Prostate gland (tissue), 2 donors: ENCODE measurements at regions of chr1 and their contacts with region 1.

Region 1: GRCh38 chr1:9874959-9875635 is 35.0 kb downstream of the CTNNBIP1 start:
- DNase-seq: peak; percentile 56
- H3K4me3 ChIP-seq: no peak overlapping the region
- H3K27ac ChIP-seq: peak overlapping the region; percentile 18 to 57
- H3K4me1 ChIP-seq: peaks cover 2% of the 10 kb centered on the region
- H3K27me3 ChIP-seq: no peaks in the 10 kb centered on the region
- CTCF ChIP-seq: peak; percentile 91 to 94 (median 92)
- POLR2A ChIP-seq: no peak

Region 2: DNA sequence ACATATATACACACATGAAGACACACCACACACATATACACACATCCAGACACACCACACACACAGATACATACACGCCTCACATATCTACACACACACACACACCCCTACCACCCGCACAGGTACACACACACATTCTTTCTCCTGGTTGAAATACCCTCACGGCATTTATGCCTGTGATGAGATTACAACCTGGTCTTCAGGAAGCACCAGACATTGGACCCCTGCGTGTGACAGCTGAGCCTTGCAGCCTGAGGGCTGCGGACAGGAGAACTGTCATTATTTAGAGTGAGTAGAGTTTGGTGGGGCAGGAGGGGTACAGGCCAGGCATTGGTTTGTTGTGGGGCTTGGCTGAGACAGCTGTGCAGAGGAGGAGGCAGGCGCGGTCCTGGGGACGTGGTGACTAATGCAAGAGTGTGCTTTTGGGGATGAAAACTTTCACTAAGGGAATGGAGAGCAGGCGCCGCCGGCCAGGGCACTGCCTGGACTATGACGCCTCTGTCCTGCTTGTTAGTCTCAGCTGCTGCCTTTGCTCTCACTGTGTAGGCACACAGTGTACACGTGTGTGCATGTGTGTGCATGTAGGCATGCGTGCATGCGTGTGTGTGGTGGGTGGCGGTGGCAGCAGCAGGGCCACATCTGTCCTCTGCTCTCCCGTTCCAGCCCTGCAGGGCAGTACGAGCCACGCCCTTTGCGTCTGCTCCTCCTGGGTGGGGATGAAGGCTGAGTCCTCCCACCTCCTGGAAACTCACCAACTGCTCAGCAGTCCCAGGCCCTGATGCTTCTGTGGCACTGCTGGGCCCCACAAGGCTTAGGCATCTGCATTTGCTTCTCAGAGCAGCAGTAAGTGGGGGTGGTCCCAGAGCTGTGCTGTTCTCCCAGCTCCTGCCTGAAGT is 524.8 kb before region 1 on chr1:
- intact Hi-C with region 1: no loop called
- DNase-seq: no peak
- H3K4me3 ChIP-seq: no peak overlapping the region
- H3K27ac ChIP-seq: no peak overlapping the region
- H3K4me1 ChIP-seq: peaks cover 4% of the 10 kb centered on the region
- H3K27me3 ChIP-seq: no peaks in the 10 kb centered on the region
- CTCF ChIP-seq: no peak
- POLR2A ChIP-seq: no peak

Region 3: DNA sequence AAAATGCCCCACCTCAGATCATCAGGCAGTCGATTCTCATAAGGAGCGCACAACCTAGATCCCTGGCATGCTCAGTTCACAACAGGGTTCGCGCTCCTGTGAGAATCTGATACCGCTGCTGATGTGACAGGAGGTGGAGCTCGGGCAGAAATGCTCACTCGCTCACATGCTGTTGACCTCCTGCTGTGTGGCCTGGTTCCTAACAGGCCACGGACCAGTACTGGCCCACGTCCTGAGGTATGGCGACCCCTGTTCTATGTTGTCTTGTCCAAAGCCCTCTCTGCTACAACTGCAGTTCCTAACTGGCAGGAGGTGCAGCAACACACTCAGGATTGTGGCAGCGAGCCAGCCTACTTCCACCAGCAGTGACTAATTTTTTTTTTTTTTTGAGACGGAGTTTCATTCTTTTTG is 122.0 kb before region 1 on chr1:
- intact Hi-C with region 1: no loop called
- DNase-seq: no peak
- H3K4me3 ChIP-seq: no peak overlapping the region
- H3K27ac ChIP-seq: no peak overlapping the region
- H3K4me1 ChIP-seq: no peaks in the 10 kb centered on the region
- H3K27me3 ChIP-seq: no peaks in the 10 kb centered on the region
- CTCF ChIP-seq: no peak
- POLR2A ChIP-seq: no peak

Region 4: DNA sequence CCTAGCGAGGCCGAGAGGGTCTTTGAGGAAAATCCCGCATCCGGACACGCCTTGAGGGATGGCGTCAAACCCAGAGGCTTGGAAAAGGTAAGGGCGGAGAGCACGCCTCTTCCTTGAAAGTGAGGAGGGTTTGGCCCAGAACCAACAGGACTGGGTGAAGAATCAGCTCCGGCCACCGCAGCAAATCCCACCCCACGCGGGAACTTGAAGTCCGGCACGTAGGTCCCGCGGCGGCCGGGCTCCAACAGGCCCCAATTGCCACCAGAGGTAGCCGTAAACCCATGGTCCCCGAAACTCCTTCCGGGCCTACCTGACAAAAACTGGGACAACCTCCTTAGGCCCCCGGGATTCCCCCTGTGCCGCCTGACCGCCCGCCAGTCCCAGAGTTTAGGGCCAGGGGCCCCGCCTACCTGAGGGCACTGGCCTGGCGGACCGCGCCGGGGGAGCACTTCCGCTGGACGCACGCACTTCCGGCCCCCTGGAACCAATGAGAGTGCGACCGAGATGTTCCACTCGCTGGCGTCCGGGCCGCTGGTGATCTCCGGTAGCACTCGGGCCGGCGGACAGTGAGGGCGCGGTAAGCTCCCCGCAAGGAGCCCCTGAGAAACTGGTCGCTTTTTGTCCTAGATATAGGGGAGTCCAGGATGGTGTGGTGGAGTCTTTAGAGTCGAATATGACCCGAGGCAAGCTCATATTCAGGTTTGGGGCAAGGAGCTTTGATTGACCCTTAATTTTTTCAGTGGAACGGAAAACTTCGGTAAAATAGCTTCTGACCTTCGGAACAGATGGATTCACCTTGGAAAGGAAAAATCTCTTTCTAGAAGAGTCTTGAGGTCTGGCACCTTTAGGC is 68.1 kb after region 1 on chr1 and contains the starts of genes LZIC and NMNAT1:
- intact Hi-C with region 1: loop called (anchors 5 kb)
- DNase-seq: peak; percentile 89
- H3K4me3 ChIP-seq: peak within 1 kb of the TSS; percentile 63 to 77
- H3K27ac ChIP-seq: peak within 1 kb of the TSS; percentile 79 to 86
- H3K4me1 ChIP-seq: no peaks in the 10 kb centered on the region
- H3K27me3 ChIP-seq: no peaks in the 10 kb centered on the region
- CTCF ChIP-seq: peak in 2 of 4 experiments; percentile 23 to 40
- POLR2A ChIP-seq: peak; percentile 79
- total RNA-seq, gene LZIC: 21.5 to 42.2 TPM
- total RNA-seq, gene NMNAT1: 7.2 to 8.7 TPM

Region 5: DNA sequence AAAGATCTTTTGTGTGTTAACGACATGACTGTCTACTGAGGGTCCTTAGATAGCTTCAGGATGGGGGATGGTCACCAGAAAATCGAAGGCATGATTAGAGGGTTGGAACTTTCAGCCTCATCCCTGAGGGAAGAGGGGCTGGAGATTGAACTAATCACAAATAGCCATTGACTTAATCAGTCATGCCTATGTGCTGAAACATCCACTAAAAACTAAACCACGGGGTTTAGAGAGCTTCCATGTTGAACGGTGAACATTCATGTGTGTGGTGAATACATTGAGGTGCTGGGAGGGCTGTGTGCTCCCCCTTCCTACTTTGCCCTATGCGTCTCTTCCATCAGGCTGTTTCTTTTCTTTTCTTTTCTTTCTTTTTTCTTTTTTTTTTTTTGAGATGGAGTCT is 138.9 kb after region 1 on chr1:
- intact Hi-C with region 1: no loop called
- DNase-seq: no peak
- H3K4me3 ChIP-seq: no peak overlapping the region
- H3K27ac ChIP-seq: no peak overlapping the region
- H3K4me1 ChIP-seq: no peaks in the 10 kb centered on the region
- H3K27me3 ChIP-seq: no peaks in the 10 kb centered on the region
- CTCF ChIP-seq: no peak
- POLR2A ChIP-seq: no peak

Region 6: DNA sequence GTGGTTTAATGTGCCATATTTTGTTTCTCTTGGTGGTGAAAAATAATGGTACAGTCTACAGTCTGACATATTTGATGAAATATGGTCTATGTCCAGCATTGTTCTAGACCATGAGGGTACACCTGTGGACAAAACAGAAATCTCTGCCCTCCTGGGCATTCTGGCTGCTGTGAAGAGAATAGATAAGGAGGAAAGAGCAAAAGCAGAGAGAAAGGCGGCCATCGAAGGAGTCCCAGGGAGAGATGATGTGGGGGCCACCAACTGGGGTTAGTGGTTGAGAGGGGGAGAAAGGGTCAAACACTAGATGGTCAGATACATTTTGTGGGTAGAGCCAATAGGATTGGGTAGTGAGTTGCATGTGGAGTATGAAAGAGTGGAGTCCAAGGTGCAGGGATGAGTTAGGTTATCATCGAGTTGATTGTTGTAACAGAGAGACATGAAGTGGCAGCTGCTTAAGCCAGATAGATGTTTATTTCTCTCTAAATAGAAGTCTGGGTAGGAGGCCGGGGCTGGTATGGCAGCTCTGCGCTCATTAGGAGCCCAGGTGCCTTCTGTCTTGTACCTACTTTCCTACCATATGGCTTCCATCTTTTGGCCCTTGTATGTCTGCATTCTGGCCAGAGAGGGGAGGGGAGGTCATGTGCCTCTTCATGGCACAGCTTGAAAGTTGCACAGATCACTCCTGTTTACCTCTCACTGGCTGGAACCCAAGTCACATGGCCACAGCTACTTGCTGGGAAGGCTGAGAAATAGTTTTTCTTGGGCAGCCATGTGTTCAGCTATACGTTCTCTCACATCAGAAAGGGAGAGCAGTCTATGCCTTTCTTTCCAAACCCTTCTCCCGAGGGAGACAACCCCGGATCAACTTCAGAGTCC is 170.6 kb after region 1 on chr1:
- intact Hi-C with region 1: no loop called
- DNase-seq: peak; percentile 82
- H3K4me3 ChIP-seq: no peak overlapping the region
- H3K27ac ChIP-seq: peak overlapping the region; percentile 71
- H3K4me1 ChIP-seq: peaks cover 13% of the 10 kb centered on the region
- H3K27me3 ChIP-seq: no peaks in the 10 kb centered on the region
- CTCF ChIP-seq: no peak
- POLR2A ChIP-seq: no peak

Region 7: GRCh38 chr1:10152709-10153284 is 277.7 kb after region 1 on chr1:
- intact Hi-C with region 1: loop called (anchors 10 kb)
- DNase-seq: peak; percentile 49
- H3K4me3 ChIP-seq: no peak overlapping the region
- H3K27ac ChIP-seq: no peak overlapping the region
- H3K4me1 ChIP-seq: no peaks in the 10 kb centered on the region
- H3K27me3 ChIP-seq: no peaks in the 10 kb centered on the region
- CTCF ChIP-seq: peak; percentile 32 to 62 (median 58)
- POLR2A ChIP-seq: no peak

Region 8: GRCh38 chr1:10338047-10338446 is 462.9 kb after region 1 on chr1:
- intact Hi-C with region 1: loop called (anchors 10 kb)
- DNase-seq: no peak
- H3K4me3 ChIP-seq: no peak overlapping the region
- H3K27ac ChIP-seq: no peak overlapping the region
- H3K4me1 ChIP-seq: no peaks in the 10 kb centered on the region
- H3K27me3 ChIP-seq: no peaks in the 10 kb centered on the region
- CTCF ChIP-seq: peak in 3 of 4 experiments; percentile 36 to 62 (median 56)
- POLR2A ChIP-seq: no peak